ENCODE measurements at regions of chrX and their contacts with region 1.

Region 1: DNA sequence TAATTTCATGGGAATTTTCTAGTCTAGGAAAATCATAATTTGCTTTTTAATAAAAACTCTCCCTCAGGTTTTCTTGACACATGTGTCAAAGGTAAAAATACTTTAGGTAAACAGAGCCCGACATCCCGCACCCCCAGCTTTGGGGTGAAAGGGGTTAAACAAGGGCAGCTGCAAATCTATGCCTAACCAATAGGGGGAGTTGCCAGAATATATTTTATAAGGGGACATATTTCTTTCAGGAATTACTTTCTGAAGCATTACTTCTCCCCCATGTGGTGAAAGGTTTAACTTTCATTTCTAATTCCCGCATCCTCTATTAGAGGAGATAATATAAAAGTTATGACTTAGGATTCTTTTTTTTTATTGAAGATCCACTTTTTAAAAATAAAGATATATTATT is 53.9 kb upstream of the HEPH start:
- DNase-seq: peak in 1 of 2 donors; percentile 36
- ATAC-seq: peak in 2 of 3 donors; percentile 52 to 58
- H3K4me3 ChIP-seq: no peak overlapping the region
- H3K4me3 Mint-ChIP-seq: no peak overlapping the region
- H3K27ac ChIP-seq: no peak overlapping the region
- H3K27ac Mint-ChIP-seq: no peak overlapping the region
- H3K4me1 ChIP-seq: peaks cover 6% of the 10 kb centered on the region
- H3K4me1 Mint-ChIP-seq: peaks cover 12 to 23% of the 10 kb centered on the region in 2 donors
- H3K27me3 ChIP-seq: no peaks in the 10 kb centered on the region
- H3K27me3 Mint-ChIP-seq: no peaks in the 10 kb centered on the region
- CTCF ChIP-seq: peak; percentile 63

Region 2: DNA sequence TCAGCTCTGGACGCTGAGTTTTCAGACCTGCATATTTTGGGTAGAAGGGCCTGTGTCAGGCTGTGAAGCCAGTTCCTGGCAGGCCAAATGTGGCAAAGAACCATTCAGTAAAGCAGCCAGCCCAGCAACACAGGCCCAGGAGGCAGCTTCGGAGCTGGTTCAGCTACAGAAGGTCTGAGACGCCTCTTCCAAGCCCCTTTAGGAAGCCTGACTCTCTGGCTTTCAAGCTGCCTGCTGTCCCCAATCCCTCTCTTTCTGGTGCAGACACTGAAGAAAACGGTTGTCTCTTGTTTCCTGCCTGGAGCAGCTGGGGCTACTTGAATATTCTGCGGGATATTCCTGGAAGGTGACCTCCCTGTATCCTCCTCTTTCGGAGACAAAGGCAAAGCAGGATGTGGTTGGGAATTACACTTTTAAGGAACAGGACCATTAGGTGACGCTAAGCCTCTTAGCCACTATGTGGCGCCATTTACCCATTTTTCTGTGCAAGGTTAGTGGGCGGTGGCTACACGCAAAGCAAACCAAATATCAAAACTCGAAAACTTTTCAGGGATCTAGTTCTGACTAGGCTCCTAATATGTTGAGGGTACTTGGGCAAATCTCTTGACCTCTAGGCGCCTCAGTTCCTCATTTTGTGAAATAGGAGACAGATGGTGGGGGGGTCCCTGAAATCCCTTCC is 528.3 kb before region 1 on chrX:
- intact Hi-C with region 1: loop called (anchors 5 kb)
- DNase-seq: peak; percentile 35 to 79
- ATAC-seq: peak; percentile 68 to 93 (median 80)
- H3K4me3 ChIP-seq: no peak overlapping the region
- H3K4me3 Mint-ChIP-seq: no peak overlapping the region
- H3K27ac ChIP-seq: no peak overlapping the region
- H3K27ac Mint-ChIP-seq: no peak overlapping the region
- H3K4me1 ChIP-seq: peaks cover 9% of the 10 kb centered on the region
- H3K4me1 Mint-ChIP-seq: peaks cover 8% of the 10 kb centered on the region in 2 donors
- H3K27me3 ChIP-seq: no peaks in the 10 kb centered on the region
- H3K27me3 Mint-ChIP-seq: peaks cover 2 to 4% of the 10 kb centered on the region in 2 donors
- CTCF ChIP-seq: peak; percentile 71

Region 3: DNA sequence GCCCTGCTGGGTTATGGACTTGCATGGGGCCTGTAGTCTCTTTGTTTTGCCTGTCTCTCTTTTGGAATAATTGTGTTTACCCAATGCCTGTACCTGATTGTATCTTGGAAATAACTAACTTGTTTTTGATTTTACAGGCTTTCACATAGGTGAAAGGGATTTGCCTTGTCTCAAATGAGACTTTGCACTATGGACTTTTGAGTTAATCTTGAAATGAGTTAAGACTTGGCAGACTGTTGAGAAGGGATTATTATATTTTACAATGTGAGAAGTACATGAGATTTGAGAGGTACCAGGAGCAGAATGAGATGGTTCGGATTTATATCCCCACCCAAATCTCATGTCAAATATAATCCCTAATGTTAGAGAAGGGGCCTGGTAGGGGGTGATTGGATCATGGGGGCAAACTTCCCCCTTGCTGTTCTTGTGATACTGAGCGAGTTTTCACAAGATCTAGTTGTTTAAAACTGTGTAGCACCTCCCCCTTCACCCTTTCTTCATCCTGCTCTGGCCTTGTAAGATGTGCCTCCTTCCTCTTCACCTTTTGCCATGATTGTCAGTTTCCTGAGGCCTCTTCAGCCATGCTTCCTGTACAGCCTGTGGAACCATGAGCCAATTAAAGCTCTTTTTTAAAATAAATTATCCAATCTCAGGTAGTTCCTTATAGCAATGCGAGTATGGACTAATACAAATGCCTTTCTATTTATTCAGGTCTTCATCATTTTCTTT is 340.4 kb before region 1 on chrX:
- intact Hi-C with region 1: loop called (anchors 10 kb)
- DNase-seq: no peak
- ATAC-seq: no peak
- H3K4me3 ChIP-seq: no peak overlapping the region
- H3K4me3 Mint-ChIP-seq: no peak overlapping the region
- H3K27ac ChIP-seq: no peak overlapping the region
- H3K27ac Mint-ChIP-seq: no peak overlapping the region
- H3K4me1 ChIP-seq: no peaks in the 10 kb centered on the region
- H3K4me1 Mint-ChIP-seq: peaks cover 0 to 10% of the 10 kb centered on the region in 2 donors
- H3K27me3 ChIP-seq: no peaks in the 10 kb centered on the region
- H3K27me3 Mint-ChIP-seq: no peaks in the 10 kb centered on the region
- CTCF ChIP-seq: no peak

Measured in natural killer cell (primary cell).